ENCODE measurements at regions of chr2 and their contacts with region 1.

Region 1: DNA sequence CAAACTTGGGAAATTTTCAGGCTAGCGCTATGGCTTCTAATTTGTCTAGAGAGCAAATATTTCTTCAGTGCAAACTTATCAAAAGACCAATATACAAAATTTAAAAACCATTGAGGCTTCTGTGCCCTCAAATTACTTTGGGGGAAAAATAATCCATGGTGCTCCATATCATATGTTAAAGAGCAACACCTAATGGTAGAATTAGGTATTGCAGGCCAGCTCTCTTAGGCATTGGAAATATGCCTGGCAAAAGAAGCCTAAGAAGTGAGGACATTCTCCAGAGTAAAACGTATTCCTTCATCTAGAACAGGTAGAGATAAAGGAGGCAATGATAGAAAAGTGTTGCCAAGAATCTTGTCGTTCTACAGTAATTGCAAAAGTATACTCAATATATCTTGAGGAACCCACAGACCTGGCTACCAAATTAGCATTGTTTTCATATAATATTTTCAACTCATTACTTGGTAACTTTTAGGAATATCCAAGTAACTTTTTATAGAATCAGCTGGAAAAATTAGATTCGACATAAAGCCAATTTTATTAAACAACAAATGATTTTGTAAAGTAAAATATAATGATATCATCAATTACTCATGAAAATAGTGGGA is 401.1 kb downstream of the BCL11A start:
- DNase-seq: peak; percentile 29
- H3K4me3 ChIP-seq: no peak overlapping the region
- H3K27ac ChIP-seq: no peak overlapping the region
- H3K4me1 ChIP-seq: no peaks in the 10 kb centered on the region
- H3K27me3 ChIP-seq: no peaks in the 10 kb centered on the region
- CTCF ChIP-seq: peak; percentile 75

Region 2: GRCh38 chr2:59301466-59302402 is 850.6 kb before region 1 on chr2:
- intact Hi-C with region 1: loop called (anchors 10 kb)
- DNase-seq: peak; percentile 34
- H3K4me3 ChIP-seq: no peak overlapping the region
- H3K27ac ChIP-seq: no peak overlapping the region
- H3K4me1 ChIP-seq: no peaks in the 10 kb centered on the region
- H3K27me3 ChIP-seq: no peaks in the 10 kb centered on the region
- CTCF ChIP-seq: peak; percentile 42

Region 3: GRCh38 chr2:59490994-59491393 is 661.3 kb before region 1 on chr2:
- intact Hi-C with region 1: no loop called
- DNase-seq: peak; percentile 18
- H3K4me3 ChIP-seq: no peak overlapping the region
- H3K27ac ChIP-seq: no peak overlapping the region
- H3K4me1 ChIP-seq: no peaks in the 10 kb centered on the region
- H3K27me3 ChIP-seq: no peaks in the 10 kb centered on the region
- CTCF ChIP-seq: no peak

Region 4: DNA sequence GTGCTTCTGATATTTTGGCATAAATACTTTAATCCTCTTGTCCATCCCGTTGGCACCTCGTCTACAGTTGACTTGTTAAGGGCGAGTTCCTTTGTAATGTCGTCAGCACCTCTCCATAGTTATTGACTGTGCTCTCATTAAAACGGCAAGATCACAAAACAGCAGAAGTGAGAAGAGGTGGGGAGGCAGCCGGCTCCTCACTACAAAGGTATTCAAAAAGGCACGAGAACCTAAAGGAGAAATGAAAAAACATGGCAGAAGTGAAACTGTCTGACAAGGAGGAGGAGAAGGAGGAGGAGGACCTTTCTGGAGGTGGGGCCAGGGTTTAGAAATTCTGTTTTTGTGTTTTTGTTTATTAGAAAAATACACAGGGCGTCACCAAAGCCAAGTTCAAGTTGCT is 165.5 kb after region 1 on chr2:
- intact Hi-C with region 1: no loop called
- DNase-seq: no peak
- H3K4me3 ChIP-seq: no peak overlapping the region
- H3K27ac ChIP-seq: no peak overlapping the region
- H3K4me1 ChIP-seq: no peaks in the 10 kb centered on the region
- H3K27me3 ChIP-seq: no peaks in the 10 kb centered on the region
- CTCF ChIP-seq: no peak

Region 5: GRCh38 chr2:60710707-60711106 is 558.4 kb after region 1 on chr2:
- intact Hi-C with region 1: no loop called
- DNase-seq: no peak
- H3K4me3 ChIP-seq: no peak overlapping the region
- H3K27ac ChIP-seq: no peak overlapping the region
- H3K4me1 ChIP-seq: no peaks in the 10 kb centered on the region
- H3K27me3 ChIP-seq: no peaks in the 10 kb centered on the region
- CTCF ChIP-seq: no peak